B cell (primary cell): ENCODE measurements at regions of chr16 and their contacts with region 1.

Region 1: DNA sequence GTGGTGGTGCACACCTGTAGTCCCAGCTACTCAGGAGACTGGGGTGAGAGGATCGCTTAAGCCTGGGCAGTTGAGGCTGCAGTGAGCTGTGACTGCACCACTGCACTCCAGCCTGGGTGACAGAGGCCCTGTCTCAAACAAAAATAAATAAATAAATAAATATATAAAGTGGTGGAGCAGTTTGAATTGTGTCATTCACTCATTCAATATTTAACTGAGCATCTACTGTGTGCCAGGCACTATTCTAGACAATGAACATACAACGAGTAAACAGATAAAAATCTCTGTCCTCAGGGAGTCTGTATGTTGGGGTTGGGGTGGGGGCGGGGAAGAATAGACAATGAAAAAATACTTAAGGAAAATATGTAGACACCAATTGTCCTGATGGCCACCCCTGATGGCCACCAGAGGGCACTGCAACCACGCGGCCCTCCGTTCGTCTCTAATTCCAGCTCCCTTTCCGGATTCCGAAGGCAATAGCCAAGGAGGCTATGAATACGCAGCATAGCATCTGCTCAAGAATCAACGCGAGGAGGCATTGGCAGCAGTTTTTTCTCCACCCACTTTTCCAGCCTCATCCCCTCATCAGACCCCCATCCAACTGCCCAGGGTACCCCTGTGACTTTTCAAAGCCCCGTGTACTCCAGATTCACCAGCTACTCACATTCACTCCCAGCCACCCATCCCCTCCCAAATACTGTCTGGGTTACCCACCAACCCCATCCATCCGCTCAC is 21.4 kb downstream of the QPRT start:
- DNase-seq: peak; percentile 80
- ATAC-seq: peak; percentile 16
- H3K4me3 ChIP-seq: no peak overlapping the region
- H3K4me3 Mint-ChIP-seq: peak overlapping the region; percentile 60
- H3K27ac ChIP-seq: no peak overlapping the region
- H3K27ac Mint-ChIP-seq: peak overlapping the region; percentile 82
- H3K4me1 ChIP-seq: peaks cover 24 to 33% of the 10 kb centered on the region in 2 donors
- H3K4me1 Mint-ChIP-seq: peaks cover 30% of the 10 kb centered on the region
- H3K27me3 ChIP-seq: no peaks in the 10 kb centered on the region
- H3K27me3 Mint-ChIP-seq: no peaks in the 10 kb centered on the region
- CTCF ChIP-seq: peak; percentile 84

Region 2: GRCh38 chr16:29710227-29711219 is 10.1 kb after region 1 on chr16:
- CTCF ChIA-PET with region 1: interaction called, 60 read pairs
- POLR2A ChIA-PET with region 1: no interaction called
- intact Hi-C with region 1: loop called (anchors 1 kb)
- DNase-seq: peak; percentile 77
- ATAC-seq: peak; percentile 88
- H3K4me3 ChIP-seq: peak overlapping the region in 1 of 5 experiments; percentile 29
- H3K4me3 Mint-ChIP-seq: peak overlapping the region; percentile 17
- H3K27ac ChIP-seq: no peak overlapping the region
- H3K27ac Mint-ChIP-seq: no peak overlapping the region
- H3K4me1 ChIP-seq: peaks cover 19 to 21% of the 10 kb centered on the region in 2 donors
- H3K4me1 Mint-ChIP-seq: peaks cover 20% of the 10 kb centered on the region
- H3K27me3 ChIP-seq: no peaks in the 10 kb centered on the region
- H3K27me3 Mint-ChIP-seq: peaks cover 8% of the 10 kb centered on the region
- CTCF ChIP-seq: peak; percentile 76

Region 3: GRCh38 chr16:29745853-29746345 is 45.5 kb after region 1 on chr16 and contains the start of gene C16orf54:
- CTCF ChIA-PET with region 1: interaction called, 5 read pairs
- POLR2A ChIA-PET with region 1: interaction called, 14 read pairs
- intact Hi-C with region 1: loop called (anchors 2 kb)
- DNase-seq: peak; percentile 93
- ATAC-seq: peak; percentile 90
- H3K4me3 ChIP-seq: peak within 1 kb of the TSS; percentile 91 to 100 (median 97)
- H3K4me3 Mint-ChIP-seq: peak within 1 kb of the TSS; percentile 99
- H3K27ac ChIP-seq: peak within 1 kb of the TSS; percentile 95
- H3K27ac Mint-ChIP-seq: peak within 1 kb of the TSS; percentile 99
- H3K4me1 ChIP-seq: peaks cover 44 to 59% of the 10 kb centered on the region in 2 donors
- H3K4me1 Mint-ChIP-seq: peaks cover 64% of the 10 kb centered on the region
- H3K27me3 ChIP-seq: no peaks in the 10 kb centered on the region
- H3K27me3 Mint-ChIP-seq: no peaks in the 10 kb centered on the region
- CTCF ChIP-seq: no peak
- total RNA-seq, gene C16orf54: 64.4 and 68.3 TPM in 2 replicates

Region 4: GRCh38 chr16:29805378-29806098 is 105.1 kb after region 1 on chr16:
- CTCF ChIA-PET with region 1: interaction called, 28 read pairs
- POLR2A ChIA-PET with region 1: interaction called, 5 read pairs
- intact Hi-C with region 1: loop called (anchors 5 kb)
- DNase-seq: peak; percentile 99
- ATAC-seq: peak; percentile 69
- H3K4me3 ChIP-seq: peak overlapping the region; percentile 63 to 95 (median 89)
- H3K4me3 Mint-ChIP-seq: peak overlapping the region; percentile 98
- H3K27ac ChIP-seq: peak overlapping the region; percentile 87 to 91
- H3K27ac Mint-ChIP-seq: peak overlapping the region; percentile 100
- H3K4me1 ChIP-seq: peaks cover 43 to 48% of the 10 kb centered on the region in 2 donors
- H3K4me1 Mint-ChIP-seq: peaks cover 44% of the 10 kb centered on the region
- H3K27me3 ChIP-seq: no peaks in the 10 kb centered on the region
- H3K27me3 Mint-ChIP-seq: no peaks in the 10 kb centered on the region
- CTCF ChIP-seq: peak; percentile 13

Region 5: DNA sequence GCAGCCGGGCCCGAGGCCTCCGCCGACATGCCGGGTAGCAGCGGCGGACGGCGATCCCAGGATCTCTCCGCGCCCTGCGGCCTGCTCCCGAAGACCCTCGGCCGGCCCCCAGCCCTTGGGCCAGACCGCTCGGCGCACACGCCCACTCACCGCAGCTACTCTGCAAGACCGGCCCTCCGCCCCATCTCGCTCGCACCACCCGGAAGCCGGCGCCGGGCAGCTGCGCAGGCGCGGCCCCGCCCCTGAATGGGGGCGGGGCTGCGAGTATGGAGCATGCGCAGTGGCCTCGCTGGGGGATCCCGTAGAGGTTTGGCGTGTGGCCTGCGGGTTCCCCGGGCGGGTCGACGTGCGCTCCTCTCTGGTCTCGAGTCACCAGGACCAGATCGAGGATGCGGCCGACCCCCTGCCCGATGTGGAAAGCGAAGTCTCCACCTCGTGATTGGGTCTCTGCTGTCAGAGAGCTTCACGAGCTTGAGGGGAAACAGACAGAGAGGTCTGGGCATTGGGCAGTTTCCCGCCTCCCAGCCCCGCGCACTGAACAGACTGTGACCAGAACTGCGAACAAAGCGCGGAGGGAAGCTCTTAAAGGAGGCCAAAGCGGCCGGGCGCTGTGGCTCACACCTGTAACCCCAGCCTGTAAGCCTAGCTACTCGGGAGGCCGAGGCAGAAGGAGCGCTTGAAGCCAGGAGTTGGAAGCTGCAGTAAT is 225.7 kb after region 1 on chr16 and contains the start of gene KCTD13:
- CTCF ChIA-PET with region 1: interaction called, 5 read pairs
- POLR2A ChIA-PET with region 1: no interaction called
- intact Hi-C with region 1: loop called (anchors 5 kb)
- DNase-seq: peak; percentile 94
- ATAC-seq: peak; percentile 91
- H3K4me3 ChIP-seq: peak within 1 kb of the TSS; percentile 48 to 95 (median 84)
- H3K4me3 Mint-ChIP-seq: peak within 1 kb of the TSS; percentile 91
- H3K27ac ChIP-seq: peak within 1 kb of the TSS; percentile 80 to 84
- H3K27ac Mint-ChIP-seq: peak within 1 kb of the TSS; percentile 96
- H3K4me1 ChIP-seq: peaks cover 14 to 21% of the 10 kb centered on the region in 2 donors
- H3K4me1 Mint-ChIP-seq: peaks cover 25% of the 10 kb centered on the region
- H3K27me3 ChIP-seq: no peaks in the 10 kb centered on the region
- H3K27me3 Mint-ChIP-seq: no peaks in the 10 kb centered on the region
- CTCF ChIP-seq: no peak
- total RNA-seq, gene KCTD13: 74.3 and 83.9 TPM in 2 replicates

Region 6: GRCh38 chr16:30018731-30019158 is 318.3 kb after region 1 on chr16:
- CTCF ChIA-PET with region 1: interaction called, 8 read pairs
- POLR2A ChIA-PET with region 1: no interaction called
- intact Hi-C with region 1: loop called (anchors 2 kb)
- DNase-seq: no peak
- ATAC-seq: no peak
- H3K4me3 ChIP-seq: no peak overlapping the region
- H3K4me3 Mint-ChIP-seq: no peak overlapping the region
- H3K27ac ChIP-seq: no peak overlapping the region
- H3K27ac Mint-ChIP-seq: no peak overlapping the region
- H3K4me1 ChIP-seq: peaks cover 6 to 11% of the 10 kb centered on the region in 2 donors
- H3K4me1 Mint-ChIP-seq: peaks cover 15% of the 10 kb centered on the region
- H3K27me3 ChIP-seq: no peaks in the 10 kb centered on the region
- H3K27me3 Mint-ChIP-seq: peaks cover 4% of the 10 kb centered on the region
- CTCF ChIP-seq: no peak